Dorsolateral prefrontal cortex (tissue), 120 donors: ENCODE measurements at regions of chr6 and their contacts with region 1.

Region 1: GRCh38 chr6:27188885-27189418 is 58.5 kb upstream of the PRSS16 start:
- DNase-seq: peak in 5 of 10 donors; percentile 32 to 60 (median 38)
- H3K4me3 ChIP-seq: peak overlapping the region; percentile 40 to 92 (median 66)
- H3K27ac ChIP-seq: peak overlapping the region in 5 of 59 donors; percentile 18 to 57 (median 45)
- H3K27me3 ChIP-seq: peaks cover 0 to 26% (median 2%) of the 10 kb centered on the region in 45 donors
- CTCF ChIP-seq: peak; percentile 61 to 87 (median 79)

Region 2: GRCh38 chr6:27280064-27280539 is 91.2 kb after region 1 on chr6:
- intact Hi-C with region 1: no loop called
- DNase-seq: no peak
- H3K4me3 ChIP-seq: peak overlapping the region in 3 of 59 donors; percentile 8 to 12 (median 8)
- H3K27ac ChIP-seq: no peak overlapping the region
- H3K27me3 ChIP-seq: peaks cover 13 to 100% (median 98%) of the 10 kb centered on the region in 45 donors
- CTCF ChIP-seq: no peak

Region 3: GRCh38 chr6:27503436-27504030 is 314.6 kb after region 1 on chr6:
- intact Hi-C with region 1: loop called in 1 of 2 experiments (anchors 10 kb)
- DNase-seq: peak in 3 of 10 donors; percentile 12 to 41 (median 37)
- H3K4me3 ChIP-seq: peak overlapping the region; percentile 9 to 65 (median 46)
- H3K27ac ChIP-seq: peak overlapping the region in 6 of 59 donors; percentile 19 to 55 (median 34)
- H3K27me3 ChIP-seq: peaks cover 0 to 93% (median 38%) of the 10 kb centered on the region in 45 donors
- CTCF ChIP-seq: peak in 2 of 56 donors; percentile 5 to 9

Region 4: GRCh38 chr6:27687154-27688013 is 498.4 kb after region 1 on chr6:
- intact Hi-C with region 1: loop called in 1 of 2 experiments (anchors 10 kb)
- DNase-seq: peak; percentile 60 to 90 (median 82)
- H3K4me3 ChIP-seq: peak overlapping the region; percentile 39 to 81 (median 62)
- H3K27ac ChIP-seq: peak overlapping the region in 50 of 59 donors; percentile 9 to 85 (median 64)
- H3K27me3 ChIP-seq: peaks cover 0 to 11% (median 4%) of the 10 kb centered on the region in 45 donors
- CTCF ChIP-seq: peak in 53 of 56 donors; percentile 25 to 68 (median 49)